K562 (cell line): ENCODE measurements at regions of chr9 and their contacts with region 1.

Region 1: GRCh38 chr9:95726756-95727155 is 148.7 kb upstream of the ERCC6L2 start:
- DNase-seq: peak; percentile 15 to 52 (median 34)
- ATAC-seq: peak; percentile 78
- H3K4me3 ChIP-seq: no peak overlapping the region
- H3K27ac ChIP-seq: no peak overlapping the region
- H3K4me1 ChIP-seq: peaks cover 0 to 8% of the 10 kb centered on the region in 2 experiments; a peak in 1 of 5 replicates
- H3K27me3 ChIP-seq: peaks cover 6 to 16% of the 10 kb centered on the region in 2 experiments; a peak in 4 of 5 replicates
- CTCF ChIP-seq: peak; percentile 52 to 75 (median 63); a peak in 5 of 6 replicates
- EP300 ChIP-seq: no peak
- POLR2A ChIP-seq: no peak
- RAD21 ChIP-seq: peak in 1 of 2 experiments; percentile 71; a peak in 2 of 4 replicates

Region 2: DNA sequence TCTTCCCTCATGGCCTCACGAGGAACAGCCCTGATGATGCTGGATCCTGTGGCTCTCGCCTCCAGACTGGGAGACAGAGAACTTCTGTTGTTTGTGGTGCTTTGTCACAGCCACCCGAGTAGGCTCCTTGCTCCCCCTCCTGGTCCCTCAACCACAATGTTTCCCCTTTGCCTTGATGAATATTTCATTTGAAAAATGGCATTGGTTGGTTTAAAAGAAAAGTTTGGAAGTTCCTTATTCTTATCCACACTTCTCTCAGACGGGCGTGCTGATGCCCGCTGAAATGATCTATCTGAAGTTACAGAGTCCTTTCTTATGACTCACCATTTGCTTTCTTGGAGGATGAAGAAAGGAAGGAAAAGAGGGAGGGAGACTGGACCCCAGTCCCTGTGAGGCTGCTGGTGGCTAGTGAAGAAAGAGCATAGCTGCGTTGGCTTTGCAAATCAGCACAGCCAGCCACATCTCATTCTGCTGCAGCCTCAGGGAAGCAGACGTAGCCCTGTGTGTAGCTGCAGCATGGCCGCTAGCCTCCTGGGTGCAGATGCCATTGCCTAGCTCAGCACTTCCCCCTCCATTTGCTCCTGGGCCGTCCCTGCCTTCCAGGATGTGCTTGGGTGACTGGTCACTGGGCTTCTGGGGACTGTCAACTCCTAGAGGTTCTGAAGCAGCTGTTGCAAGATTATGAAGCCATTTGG is 334.7 kb after region 1 on chr9:
- CTCF ChIA-PET with region 1: interaction called, 5 read pairs
- POLR2A ChIA-PET with region 1: no interaction called
- in situ Hi-C with region 1: no loop called
- intact Hi-C with region 1: loop called (anchors 5 kb)
- DNase-seq: peak; percentile 40 to 54 (median 44)
- ATAC-seq: peak; percentile 83
- H3K4me3 ChIP-seq: no peak overlapping the region
- H3K27ac ChIP-seq: no peak overlapping the region
- H3K4me1 ChIP-seq: no peaks in the 10 kb centered on the region
- H3K27me3 ChIP-seq: peaks cover 5 to 22% of the 10 kb centered on the region in 2 experiments; a peak in 3 of 5 replicates
- CTCF ChIP-seq: peak; percentile 57 to 68 (median 59); a peak in 5 of 6 replicates
- EP300 ChIP-seq: no peak
- POLR2A ChIP-seq: no peak
- RAD21 ChIP-seq: peak; percentile 57 to 78

Region 3: DNA sequence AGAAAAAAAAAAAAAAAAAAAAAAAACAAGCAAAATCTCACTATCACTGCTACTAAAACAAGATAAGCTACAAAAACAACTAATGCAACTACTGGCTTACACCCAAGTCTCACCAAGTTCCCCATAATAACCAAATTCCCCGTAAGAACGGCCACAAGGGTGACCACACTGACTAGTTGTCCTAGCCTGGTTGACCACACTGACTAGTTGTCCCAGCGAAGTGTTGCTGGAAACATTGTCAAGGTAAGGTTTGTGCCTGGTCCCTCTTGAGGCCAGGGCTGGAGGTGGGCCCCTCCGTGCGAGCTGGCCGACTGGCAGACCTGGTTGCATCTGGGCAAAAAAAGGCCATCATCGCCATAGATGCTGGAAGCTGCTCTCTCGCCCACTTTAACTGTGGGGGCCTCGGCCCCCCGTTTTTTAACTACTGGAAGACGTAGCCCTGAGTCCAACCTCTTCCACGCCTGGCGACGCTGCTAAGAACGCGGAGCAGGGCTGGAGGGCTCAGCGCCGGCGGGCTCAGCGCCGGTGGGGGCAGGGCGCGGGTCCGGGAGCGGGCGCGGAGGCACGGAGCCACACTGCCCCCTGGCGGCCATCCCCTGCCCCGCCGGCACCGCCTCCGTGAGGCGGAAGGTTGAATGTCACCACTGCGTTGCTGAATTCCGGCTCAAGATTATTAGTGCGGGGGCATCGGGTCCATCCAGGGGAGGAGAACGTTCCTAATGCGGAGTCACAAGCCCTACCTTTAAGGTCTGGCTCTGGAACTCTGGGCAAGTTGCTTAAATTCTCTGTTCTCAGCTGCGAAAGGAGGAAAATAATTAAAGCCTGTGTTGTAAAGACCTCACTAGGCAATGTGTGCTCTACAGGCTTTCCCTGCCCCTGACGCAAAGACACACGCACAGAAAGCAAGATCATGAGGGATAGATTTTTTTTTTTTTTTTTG is 491.3 kb after region 1 on chr9:
- CTCF ChIA-PET with region 1: no interaction called
- POLR2A ChIA-PET with region 1: no interaction called
- in situ Hi-C with region 1: no loop called
- intact Hi-C with region 1: loop called (anchors 5 kb)
- DNase-seq: peak; percentile 75 to 90 (median 86)
- ATAC-seq: peak; percentile 98
- H3K4me3 ChIP-seq: no peak overlapping the region
- H3K27ac ChIP-seq: no peak overlapping the region
- H3K4me1 ChIP-seq: peaks cover 4 to 20% of the 10 kb centered on the region in 2 experiments; a peak in 2 of 5 replicates
- H3K27me3 ChIP-seq: peaks cover under 1 to 37% of the 10 kb centered on the region in 2 experiments; a peak in 4 of 5 replicates
- CTCF ChIP-seq: peak; percentile 93 to 99 (median 97)
- EP300 ChIP-seq: no peak
- POLR2A ChIP-seq: no peak
- RAD21 ChIP-seq: peak; percentile 76 to 84